PC-3 (cell line): ENCODE measurements at regions of chr3 and their contacts with region 1.

Region 1: DNA sequence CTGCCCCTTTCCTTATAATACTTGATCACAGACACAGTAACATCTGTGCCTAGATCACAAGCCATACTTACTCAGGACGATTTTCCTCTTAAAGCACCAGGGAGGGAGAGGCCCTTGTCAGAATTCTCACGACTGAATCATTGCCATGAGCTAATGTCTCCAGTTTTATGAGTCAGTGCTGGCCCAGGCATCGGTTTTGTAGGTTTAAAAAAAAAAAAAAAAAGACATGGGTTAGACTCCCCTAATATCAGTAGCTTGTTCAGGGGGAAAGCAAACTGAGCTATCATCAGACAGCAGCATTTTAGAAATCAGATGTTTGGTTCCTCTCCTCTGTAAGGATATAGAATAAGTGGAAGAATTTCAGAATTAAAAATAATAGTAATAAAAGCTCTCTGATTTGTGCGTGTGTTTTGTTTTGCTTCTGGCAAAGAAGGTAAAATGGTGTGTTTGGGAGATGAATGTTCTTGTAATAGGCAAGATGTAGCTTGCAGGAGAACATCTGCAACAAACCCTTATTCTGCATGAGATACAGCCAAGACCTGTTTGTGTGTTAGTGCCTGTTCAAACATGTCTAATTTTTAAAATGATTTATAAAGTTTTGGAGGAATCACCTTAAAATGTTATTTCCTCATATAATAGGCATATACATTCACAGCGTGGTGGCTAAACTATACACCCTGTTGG is 193.6 kb downstream of the TP63 start:
- DNase-seq: peak; percentile 91
- ATAC-seq: peak; percentile 81
- H3K4me3 ChIP-seq: no peak overlapping the region
- H3K27ac ChIP-seq: peak overlapping the region; percentile 48
- H3K4me1 ChIP-seq: peaks cover 36% of the 10 kb centered on the region
- H3K27me3 ChIP-seq: no peaks in the 10 kb centered on the region
- CTCF ChIP-seq: no peak

Region 2: DNA sequence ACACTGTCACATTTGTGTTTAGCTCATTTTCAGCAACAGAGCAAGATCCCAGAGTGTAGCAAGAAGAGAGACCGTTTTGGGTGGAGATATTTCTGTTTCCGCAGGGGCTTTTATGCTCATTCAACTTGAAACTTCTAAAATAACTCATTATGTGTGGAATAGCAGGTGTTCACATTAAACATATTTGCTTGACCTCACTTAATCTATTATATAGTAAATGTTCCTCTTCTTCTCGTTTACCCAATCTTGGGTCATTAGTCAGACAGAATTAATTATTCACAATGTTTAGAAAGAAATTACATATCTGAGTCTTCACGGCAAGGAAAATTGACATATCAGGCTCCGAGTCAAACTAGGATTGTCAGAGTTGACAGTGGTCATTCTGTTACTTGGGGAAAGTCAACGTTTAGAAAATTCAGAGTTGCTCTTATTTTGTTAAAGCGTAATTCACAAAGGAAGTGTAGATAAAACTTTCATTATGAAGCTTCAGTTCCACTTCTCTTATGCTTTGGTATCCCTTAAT is 430.1 kb before region 1 on chr3:
- CTCF ChIA-PET with region 1: no interaction called
- POLR2A ChIA-PET with region 1: no interaction called
- intact Hi-C with region 1: loop called (anchors 5 kb)
- DNase-seq: no peak
- ATAC-seq: no peak
- H3K4me3 ChIP-seq: no peak overlapping the region
- H3K27ac ChIP-seq: no peak overlapping the region
- H3K4me1 ChIP-seq: peaks cover 20% of the 10 kb centered on the region
- H3K27me3 ChIP-seq: no peaks in the 10 kb centered on the region
- CTCF ChIP-seq: no peak

Region 3: GRCh38 chr3:189716972-189717371 is 107.8 kb before region 1 on chr3:
- CTCF ChIA-PET with region 1: no interaction called
- POLR2A ChIA-PET with region 1: no interaction called
- intact Hi-C with region 1: loop called (anchors 2 kb)
- DNase-seq: no peak
- ATAC-seq: no peak
- H3K4me3 ChIP-seq: no peak overlapping the region
- H3K27ac ChIP-seq: no peak overlapping the region; the same call in 1 of the 2 replicates
- H3K4me1 ChIP-seq: peaks cover 43% of the 10 kb centered on the region
- H3K27me3 ChIP-seq: no peaks in the 10 kb centered on the region
- CTCF ChIP-seq: no peak

Region 4: DNA sequence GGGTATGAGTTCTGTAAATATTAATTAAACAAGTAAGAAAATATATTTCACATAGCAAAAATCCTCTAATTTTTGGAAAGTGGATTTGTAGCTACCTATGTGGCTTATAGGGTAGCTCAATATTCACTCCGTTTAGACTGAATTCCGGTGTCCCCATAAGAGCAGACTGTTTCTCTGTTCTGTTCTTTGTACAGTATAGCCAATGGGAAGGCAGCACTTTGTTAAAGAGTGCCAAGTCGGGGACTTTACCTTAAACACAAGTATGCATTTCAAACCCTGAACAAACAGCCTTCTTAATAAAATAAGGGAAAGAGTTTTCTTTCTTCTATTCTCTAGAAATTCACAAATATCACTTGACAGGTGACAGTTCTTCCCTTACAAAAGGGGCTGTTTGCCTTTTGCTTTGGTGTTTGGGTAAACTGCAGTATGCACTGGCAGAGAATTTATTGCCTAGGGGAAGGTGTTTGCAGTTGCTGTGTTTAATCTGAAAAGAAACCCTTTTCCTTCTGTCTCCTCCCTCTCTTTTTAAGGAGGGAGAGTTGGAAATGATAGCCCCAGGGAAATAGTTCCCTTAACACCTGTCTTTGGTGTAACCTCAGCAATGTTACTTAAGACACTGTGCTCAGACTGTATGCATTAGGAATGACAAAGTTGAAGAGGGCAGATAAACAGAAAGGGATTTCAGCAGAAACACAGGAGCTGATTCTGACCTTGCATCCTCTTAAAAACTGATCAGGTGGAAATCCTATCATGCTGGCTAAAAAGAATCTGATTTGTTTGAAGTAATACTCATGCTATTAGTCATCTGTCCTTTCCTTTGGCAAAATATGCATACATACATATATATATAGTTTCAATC is 68.3 kb before region 1 on chr3:
- CTCF ChIA-PET with region 1: no interaction called
- POLR2A ChIA-PET with region 1: no interaction called
- intact Hi-C with region 1: loop called (anchors 2 kb)
- DNase-seq: peak; percentile 96
- ATAC-seq: peak; percentile 94
- H3K4me3 ChIP-seq: peak overlapping the region; percentile 23; the same call in 1 of the 2 replicates
- H3K27ac ChIP-seq: peak overlapping the region; percentile 48
- H3K4me1 ChIP-seq: peaks cover 32% of the 10 kb centered on the region
- H3K27me3 ChIP-seq: no peaks in the 10 kb centered on the region
- CTCF ChIP-seq: no peak

Region 5: DNA sequence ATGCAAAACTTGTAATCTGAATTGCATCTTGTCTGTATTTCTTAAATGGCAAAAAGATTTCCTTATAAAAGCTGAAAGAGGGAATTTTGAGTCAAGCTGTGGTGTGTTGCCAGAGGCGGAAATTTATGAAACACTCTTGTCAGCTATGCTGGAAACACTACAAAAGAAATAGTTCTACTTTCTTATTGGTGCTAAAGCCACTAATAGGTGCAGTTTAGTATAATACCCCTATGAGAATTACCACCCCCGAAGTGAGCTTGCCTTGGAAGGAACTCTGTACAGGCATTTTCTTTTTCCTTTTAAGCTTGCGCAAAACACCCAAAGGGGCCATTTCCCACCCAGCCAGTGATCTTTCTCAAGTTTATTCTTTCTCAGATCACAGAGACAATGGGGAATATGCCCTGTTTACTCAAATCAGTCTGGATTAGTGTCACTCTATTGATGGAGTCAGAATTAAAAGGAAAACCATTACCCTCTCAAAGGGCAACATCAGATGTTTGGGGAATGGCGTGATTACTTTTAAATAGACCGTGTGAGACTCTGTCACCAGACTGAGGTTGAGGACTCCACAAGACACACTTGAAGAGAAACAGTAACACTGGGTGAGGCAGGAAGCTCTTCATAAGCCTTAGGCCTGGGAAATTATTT is 27.5 kb before region 1 on chr3:
- CTCF ChIA-PET with region 1: no interaction called
- POLR2A ChIA-PET with region 1: interaction called, 14 read pairs
- intact Hi-C with region 1: no loop called
- DNase-seq: no peak
- ATAC-seq: no peak
- H3K4me3 ChIP-seq: no peak overlapping the region
- H3K27ac ChIP-seq: no peak overlapping the region
- H3K4me1 ChIP-seq: no peaks in the 10 kb centered on the region
- H3K27me3 ChIP-seq: no peaks in the 10 kb centered on the region
- CTCF ChIP-seq: no peak

Region 6: GRCh38 chr3:189908646-189909045 is 83.9 kb after region 1 on chr3:
- CTCF ChIA-PET with region 1: no interaction called
- POLR2A ChIA-PET with region 1: interaction called, 4 read pairs
- intact Hi-C with region 1: loop called (anchors 2 kb)
- DNase-seq: peak; percentile 97
- ATAC-seq: peak; percentile 85
- H3K4me3 ChIP-seq: peak overlapping the region; percentile 13; the same call in 1 of the 2 replicates
- H3K27ac ChIP-seq: peak overlapping the region; percentile 90
- H3K4me1 ChIP-seq: peaks cover 42% of the 10 kb centered on the region
- H3K27me3 ChIP-seq: no peaks in the 10 kb centered on the region
- CTCF ChIP-seq: no peak